ENCODE measurements at regions of chr12 and their contacts with region 1.

Region 1: DNA sequence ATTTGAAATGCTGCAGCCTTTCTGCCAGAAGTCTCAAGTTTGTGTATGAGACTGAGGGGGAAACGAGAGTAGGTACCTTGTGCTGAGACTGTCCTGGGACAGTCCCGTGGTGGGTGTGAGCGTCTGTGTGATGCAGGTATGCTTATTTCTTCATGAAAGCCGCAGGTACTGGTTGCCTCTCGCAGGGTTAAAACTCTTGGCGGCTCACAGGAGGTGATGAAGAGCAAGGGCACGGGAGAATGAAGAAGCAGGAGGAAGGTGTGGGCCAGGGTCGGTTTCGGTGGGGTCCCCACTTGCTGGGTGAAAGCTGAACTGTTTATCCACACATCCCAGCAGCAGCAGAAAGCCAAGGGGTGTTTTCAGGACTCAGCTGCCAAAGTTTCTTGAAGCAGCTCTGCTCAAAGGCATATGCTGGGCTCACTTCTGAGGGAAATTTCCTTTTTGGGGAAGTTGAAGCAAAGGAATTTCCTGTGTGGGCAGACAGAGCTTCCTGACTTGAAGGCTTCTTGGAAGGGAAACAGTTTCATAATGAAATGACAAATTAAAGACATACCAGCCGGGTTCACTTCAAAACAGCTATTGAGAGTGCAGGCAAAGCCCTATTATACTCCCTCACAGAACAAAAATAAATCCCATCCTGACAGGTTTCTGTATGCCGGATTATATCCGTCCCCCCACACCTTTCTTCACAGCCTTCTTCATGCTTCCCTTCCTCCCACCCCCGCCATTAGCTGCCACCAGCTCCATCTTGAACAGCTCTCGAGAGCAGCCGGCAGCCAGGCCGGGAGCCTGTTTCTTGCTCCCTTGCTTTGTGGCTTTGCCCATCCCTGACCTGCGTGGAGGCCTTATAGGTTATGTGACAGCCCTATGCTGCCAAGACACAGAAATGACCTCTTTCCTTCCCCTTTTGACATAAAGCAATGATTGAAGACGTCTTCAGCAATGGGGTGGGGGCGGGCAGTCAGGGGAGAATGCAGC is 116.6 kb downstream of the ETV6 start:
- DNase-seq: peak; percentile 92
- H3K4me3 Mint-ChIP-seq: peak overlapping the region; percentile 43
- H3K27ac Mint-ChIP-seq: peak overlapping the region; percentile 92
- H3K4me1 Mint-ChIP-seq: peaks cover 99% of the 10 kb centered on the region
- H3K27me3 Mint-ChIP-seq: no peaks in the 10 kb centered on the region

Region 2: DNA sequence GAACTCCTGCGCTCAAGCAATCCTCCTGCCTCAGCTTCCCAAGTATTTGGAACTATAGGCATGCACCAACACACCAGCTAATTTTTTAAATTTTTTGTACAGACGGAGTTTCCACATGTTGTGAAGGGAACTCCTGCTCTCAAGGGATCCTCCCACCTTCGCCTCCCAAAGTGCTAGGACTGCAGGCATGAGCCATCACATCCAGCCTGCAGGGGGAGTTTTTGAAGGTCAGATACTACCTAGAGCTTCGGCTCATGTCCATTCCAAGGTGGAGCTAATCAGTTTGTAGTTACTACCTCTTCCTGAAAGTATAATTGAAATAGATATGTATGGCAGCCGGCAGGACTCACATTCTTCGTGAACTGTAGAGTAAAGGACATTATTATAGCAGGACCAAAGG is 740.0 kb before region 1 on chr12:
- CTCF ChIA-PET with region 1: no interaction called
- intact Hi-C with region 1: no loop called
- DNase-seq: no peak
- H3K4me3 Mint-ChIP-seq: no peak overlapping the region
- H3K27ac Mint-ChIP-seq: no peak overlapping the region
- H3K4me1 Mint-ChIP-seq: no peaks in the 10 kb centered on the region
- H3K27me3 Mint-ChIP-seq: no peaks in the 10 kb centered on the region

Region 3: DNA sequence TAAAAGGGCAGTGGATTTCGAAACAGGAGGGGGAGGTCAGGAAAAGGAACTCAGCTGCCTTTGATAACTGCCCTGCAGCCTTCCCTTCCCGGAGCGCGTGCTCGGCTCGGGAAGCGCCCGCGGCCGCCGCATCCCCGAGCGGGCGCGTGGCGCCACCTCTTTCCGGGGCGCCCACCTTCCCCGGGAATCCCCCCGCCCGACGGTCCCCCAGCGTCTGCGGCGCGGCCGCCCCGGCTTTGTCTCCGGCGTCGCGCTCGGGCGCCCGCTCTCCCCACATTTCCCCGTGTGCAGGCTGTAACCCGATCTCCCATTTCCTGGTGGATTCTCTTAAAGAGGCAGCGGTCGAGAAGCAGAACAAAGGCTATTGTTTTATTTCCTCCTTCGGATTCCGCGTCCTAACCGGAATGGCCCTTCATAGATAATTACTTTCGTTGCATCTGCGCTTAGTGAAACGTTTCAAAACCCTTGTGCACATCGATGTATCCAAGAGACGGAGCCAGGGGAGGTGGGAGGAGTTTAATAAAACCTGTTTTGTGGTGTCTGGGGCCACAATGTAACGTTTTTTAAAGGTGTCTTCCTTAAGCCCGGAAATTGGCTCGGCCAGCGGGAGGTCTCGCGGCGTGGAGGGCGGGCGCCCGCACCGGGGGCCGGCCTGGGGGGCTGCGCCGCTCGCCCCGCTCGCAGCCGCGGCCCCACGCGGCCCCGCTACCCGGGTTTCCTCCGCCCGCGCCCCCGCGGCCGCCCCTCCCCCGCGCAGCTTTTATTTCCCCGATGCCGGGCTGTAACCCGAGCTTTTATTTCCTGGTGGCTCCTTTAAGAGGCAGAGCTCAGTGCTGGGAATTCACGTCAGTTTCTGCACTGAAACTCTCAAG is 117.0 kb before region 1 on chr12 and contains the start of gene ETV6:
- CTCF ChIA-PET with region 1: interaction called, 4 read pairs
- intact Hi-C with region 1: loop called (anchors 1 kb)
- DNase-seq: peak; percentile 90
- H3K4me3 Mint-ChIP-seq: peak within 1 kb of the TSS; percentile 98
- H3K27ac Mint-ChIP-seq: peak within 1 kb of the TSS; percentile 99
- H3K4me1 Mint-ChIP-seq: peaks cover 27% of the 10 kb centered on the region
- H3K27me3 Mint-ChIP-seq: no peaks in the 10 kb centered on the region
- total RNA-seq, gene ETV6: 48.1 to 48.6 TPM

Region 4: GRCh38 chr12:11730299-11731041 is 35.6 kb before region 1 on chr12:
- CTCF ChIA-PET with region 1: interaction called, 15 read pairs
- intact Hi-C with region 1: loop called (anchors 1 kb)
- DNase-seq: peak; percentile 27
- H3K4me3 Mint-ChIP-seq: no peak overlapping the region
- H3K27ac Mint-ChIP-seq: peak overlapping the region; percentile 85
- H3K4me1 Mint-ChIP-seq: peaks cover 86% of the 10 kb centered on the region
- H3K27me3 Mint-ChIP-seq: no peaks in the 10 kb centered on the region

Region 5: DNA sequence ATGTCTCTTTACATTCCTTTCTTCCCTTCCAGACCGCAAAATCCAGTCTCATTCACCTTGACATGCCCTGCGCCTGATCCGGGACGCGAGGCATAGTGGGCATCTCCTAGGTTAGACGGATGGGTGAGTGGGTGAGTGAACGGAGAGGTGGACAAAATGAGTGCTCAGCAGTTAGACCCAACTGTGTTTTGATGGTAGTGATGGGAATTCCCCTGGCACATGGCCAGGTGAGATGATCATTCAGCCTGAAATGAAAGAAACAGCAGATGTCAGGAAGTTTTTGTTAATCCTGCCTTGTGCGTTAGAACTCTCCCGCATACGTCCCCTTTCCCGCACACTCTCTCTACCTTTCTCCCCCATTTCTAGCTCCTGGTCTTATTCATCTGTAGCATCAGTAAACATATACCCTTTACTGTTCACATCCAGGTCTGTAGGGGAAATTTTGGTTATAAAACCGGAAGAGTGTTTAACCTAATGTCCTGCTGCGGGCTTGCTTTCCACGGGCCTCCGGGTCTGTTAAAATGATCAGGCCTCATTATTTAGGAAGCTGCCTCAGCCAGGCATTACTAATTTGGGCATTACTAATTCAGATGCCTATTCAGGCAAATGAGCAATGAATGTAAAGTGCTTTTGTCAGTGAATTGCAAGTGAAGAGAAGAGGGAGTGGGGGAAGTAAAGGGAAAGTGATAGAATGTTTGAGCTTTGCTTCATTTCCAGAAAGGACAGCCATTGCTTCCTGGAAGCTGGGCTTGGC is 56.2 kb after region 1 on chr12:
- CTCF ChIA-PET with region 1: interaction called, 4 read pairs
- intact Hi-C with region 1: loop called (anchors 1 kb)
- DNase-seq: peak; percentile 83
- H3K4me3 Mint-ChIP-seq: peak overlapping the region; percentile 44
- H3K27ac Mint-ChIP-seq: peak overlapping the region; percentile 91
- H3K4me1 Mint-ChIP-seq: peaks cover 61% of the 10 kb centered on the region
- H3K27me3 Mint-ChIP-seq: no peaks in the 10 kb centered on the region

Region 6: DNA sequence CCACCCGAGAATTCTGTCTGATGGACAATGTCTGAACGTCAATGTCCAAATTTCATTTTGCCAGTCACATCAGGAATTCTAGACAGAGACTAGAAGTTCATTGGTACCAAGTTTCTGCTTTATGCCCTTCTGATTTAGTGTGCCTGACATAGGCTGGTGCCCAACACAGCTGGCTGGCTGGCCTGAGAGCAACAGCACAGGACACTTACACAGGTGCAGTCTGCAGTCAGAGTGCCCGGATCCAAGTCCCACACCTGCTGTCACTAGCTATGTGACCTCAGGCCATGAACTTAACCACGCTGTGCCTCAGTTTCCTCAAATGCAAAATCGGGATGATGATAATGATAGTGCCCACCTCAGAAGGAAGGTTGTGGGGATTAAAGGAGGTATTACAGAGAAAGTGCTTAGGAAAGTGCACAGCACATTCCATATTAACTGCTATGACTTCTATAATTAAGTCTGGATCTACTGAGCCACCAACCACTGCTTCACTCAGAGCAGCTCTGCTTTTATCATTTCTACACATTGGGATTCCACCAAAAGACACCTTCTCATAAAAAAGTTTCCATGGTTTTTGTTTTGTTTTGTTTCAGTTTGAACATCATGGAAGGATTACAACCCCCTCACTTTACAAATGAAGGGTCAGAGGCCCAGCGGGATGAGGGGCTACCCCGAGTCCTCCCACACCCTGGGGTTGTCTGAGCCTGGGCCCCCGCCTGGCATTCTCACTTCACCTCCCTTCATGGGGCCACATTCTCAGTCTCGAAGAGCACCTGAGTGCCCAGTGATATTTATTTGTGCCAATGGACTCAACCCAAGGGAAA is 135.8 kb after region 1 on chr12:
- CTCF ChIA-PET with region 1: no interaction called
- intact Hi-C with region 1: loop called (anchors 1 kb)
- DNase-seq: peak; percentile 56
- H3K4me3 Mint-ChIP-seq: peak overlapping the region; percentile 54
- H3K27ac Mint-ChIP-seq: peak overlapping the region; percentile 79
- H3K4me1 Mint-ChIP-seq: peaks cover 35% of the 10 kb centered on the region
- H3K27me3 Mint-ChIP-seq: no peaks in the 10 kb centered on the region

Region 7: GRCh38 chr12:11991604-11992003 is 225.5 kb after region 1 on chr12:
- CTCF ChIA-PET with region 1: no interaction called
- intact Hi-C with region 1: no loop called
- DNase-seq: no peak
- H3K4me3 Mint-ChIP-seq: no peak overlapping the region
- H3K27ac Mint-ChIP-seq: no peak overlapping the region
- H3K4me1 Mint-ChIP-seq: peaks cover 2% of the 10 kb centered on the region
- H3K27me3 Mint-ChIP-seq: no peaks in the 10 kb centered on the region

Region 8: DNA sequence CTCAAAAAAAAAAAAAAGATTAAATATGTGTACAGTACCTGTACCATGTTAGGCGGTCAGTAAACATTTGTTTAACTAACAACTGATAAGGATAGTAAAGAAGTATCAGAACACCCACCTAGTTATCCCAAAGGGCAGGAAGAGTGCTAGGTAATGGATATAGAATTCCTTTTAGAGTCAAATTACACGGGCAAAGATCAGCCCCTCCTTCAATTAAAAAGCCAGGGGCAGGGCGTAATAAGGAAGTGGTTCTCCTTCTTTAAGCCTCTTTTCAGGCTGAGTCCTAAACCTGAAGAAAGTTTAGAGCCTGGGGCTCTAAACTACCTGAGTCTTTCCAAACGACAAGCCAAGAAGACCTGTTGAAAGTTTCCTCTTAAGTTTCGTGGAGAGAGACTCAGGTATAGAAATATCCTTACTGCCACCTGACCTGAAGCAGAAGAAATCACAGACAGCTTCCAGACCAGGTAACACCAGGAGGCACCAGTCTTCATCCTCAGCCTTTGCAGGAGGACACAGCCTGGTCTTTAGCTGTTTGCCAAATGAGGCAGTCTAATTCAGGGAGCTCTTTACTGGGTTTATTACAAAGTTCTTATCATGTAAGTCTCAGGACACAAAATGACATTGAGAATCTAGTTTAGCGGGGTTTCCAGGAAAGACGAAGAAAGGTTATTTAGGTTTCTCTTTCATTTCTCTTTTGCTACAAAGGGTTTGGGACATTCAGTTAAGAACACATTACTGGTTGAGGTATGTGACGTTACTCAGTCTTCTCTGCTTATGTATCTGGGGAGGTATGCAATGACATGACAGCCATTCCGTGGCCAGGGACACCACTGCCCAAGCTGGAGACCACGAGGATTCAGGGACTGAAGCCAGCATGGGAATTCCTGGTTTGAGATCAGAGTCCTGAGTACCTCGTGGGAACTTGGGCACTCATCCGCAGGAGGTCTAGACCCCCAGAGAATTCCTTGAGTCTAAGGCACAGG is 304.9 kb after region 1 on chr12 and contains the start of gene BCL2L14:
- CTCF ChIA-PET with region 1: no interaction called
- intact Hi-C with region 1: loop called (anchors 5 kb)
- DNase-seq: peak; percentile 52
- H3K4me3 Mint-ChIP-seq: peak within 1 kb of the TSS; percentile 85
- H3K27ac Mint-ChIP-seq: peak within 1 kb of the TSS; percentile 90
- H3K4me1 Mint-ChIP-seq: peaks cover 36% of the 10 kb centered on the region
- H3K27me3 Mint-ChIP-seq: no peaks in the 10 kb centered on the region
- total RNA-seq, gene BCL2L14: 19.4 to 21.8 TPM

Measured in activated naive CD4-positive, alpha-beta T cell treated with anti-CD3 and anti-CD28 coated beads for 36 hours (primary cell).